ENCODE measurements at regions of chr6 and their contacts with region 1.

Region 1: DNA sequence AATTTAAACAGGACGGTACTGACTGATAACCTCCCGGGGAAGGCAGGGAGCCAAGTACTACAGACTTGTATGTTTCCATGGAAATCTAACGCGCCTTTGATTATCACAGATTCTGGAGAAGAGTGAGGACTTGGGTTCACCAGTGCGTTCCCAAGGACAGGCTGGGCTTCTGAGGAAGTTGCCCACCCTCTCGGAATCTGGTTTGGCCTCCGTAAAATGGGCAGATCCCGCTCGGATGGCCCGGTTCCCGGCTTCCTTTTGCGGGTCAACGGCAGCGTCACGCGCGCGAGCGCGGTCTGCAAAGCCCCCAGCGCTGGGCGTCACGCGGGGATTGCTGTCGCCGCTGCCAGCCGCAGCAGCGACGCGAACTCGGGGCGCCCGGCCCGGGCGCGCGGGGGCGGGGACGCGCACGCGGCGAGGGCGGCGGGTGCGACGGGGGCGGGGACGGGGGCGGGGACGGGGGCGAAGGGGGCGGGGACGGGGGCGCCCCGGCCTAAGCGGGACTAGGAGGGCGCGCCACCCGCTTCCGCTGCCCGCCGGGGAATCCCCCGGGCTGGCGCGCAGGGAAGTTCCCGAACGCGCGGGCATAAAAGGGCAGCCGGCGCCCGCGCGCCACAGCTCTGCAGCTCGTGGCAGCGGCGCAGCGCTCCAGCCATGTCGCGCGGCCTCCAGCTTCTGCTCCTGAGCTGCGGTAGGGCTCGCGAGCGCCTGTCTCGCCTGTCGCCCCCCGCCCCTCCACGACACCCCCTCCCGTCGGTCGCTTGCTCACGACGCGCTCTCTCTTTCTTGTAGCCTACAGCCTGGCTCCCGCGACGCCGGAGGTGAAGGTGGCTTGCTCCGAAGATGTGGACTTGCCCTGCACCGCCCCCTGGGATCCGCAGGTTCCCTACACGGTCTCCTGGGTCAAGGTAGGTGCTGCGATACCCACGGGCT is at the start of gene CD83:
- DNase-seq: peak; percentile 79 to 89 (median 84)
- ATAC-seq: peak; percentile 94
- H3K4me3 ChIP-seq: peak within 1 kb of the TSS; percentile 91
- H3K4me3 Mint-ChIP-seq: peak within 1 kb of the TSS; percentile 87 to 97 (median 93)
- H3K27ac ChIP-seq: peak within 1 kb of the TSS; percentile 87
- H3K27ac Mint-ChIP-seq: peak within 1 kb of the TSS; percentile 91 to 96 (median 94)
- H3K4me1 ChIP-seq: peaks cover 11 to 15% of the 10 kb centered on the region in 2 donors
- H3K4me1 Mint-ChIP-seq: peaks cover 18 to 41% (median 28%) of the 10 kb centered on the region in 7 donors
- H3K27me3 ChIP-seq: no peaks in the 10 kb centered on the region
- H3K27me3 Mint-ChIP-seq: peaks cover 0 to 35% (median 0%) of the 10 kb centered on the region in 5 donors
- total RNA-seq, gene CD83: 5.0 to 113 (median 18.3) TPM

Region 2: DNA sequence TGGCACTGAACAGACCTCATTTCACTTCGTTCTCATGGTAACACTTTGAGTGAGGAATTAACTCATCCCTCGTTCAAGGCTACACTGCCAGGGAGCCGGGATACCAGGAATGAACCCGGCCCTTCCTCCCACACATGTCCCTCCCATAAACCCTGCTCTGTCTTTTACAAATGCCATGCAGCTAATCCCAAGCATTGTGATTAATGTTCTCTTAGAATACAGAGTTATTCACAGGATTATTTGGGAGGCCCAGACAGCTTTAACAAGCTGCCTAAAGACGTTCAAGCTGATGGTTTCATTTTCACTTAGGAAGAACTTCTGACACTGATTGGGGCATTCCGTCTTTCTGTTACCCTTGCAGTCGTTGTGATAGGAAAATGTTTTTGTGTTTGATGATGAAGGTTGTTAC is 42.3 kb before region 1 on chr6:
- CTCF ChIA-PET with region 1: no interaction called
- POLR2A ChIA-PET with region 1: interaction called, 3 read pairs
- intact Hi-C with region 1: loop called (anchors 1 kb)
- DNase-seq: peak in 7 of 9 donors; percentile 46 to 71 (median 61)
- ATAC-seq: peak; percentile 93
- H3K4me3 ChIP-seq: peak overlapping the region; percentile 57
- H3K4me3 Mint-ChIP-seq: peak overlapping the region; percentile 72 to 92 (median 82)
- H3K27ac ChIP-seq: peak overlapping the region; percentile 84
- H3K27ac Mint-ChIP-seq: peak overlapping the region; percentile 87 to 99 (median 95)
- H3K4me1 ChIP-seq: peaks cover 5 to 7% of the 10 kb centered on the region in 2 donors
- H3K4me1 Mint-ChIP-seq: peaks cover 16 to 47% (median 27%) of the 10 kb centered on the region in 7 donors
- H3K27me3 ChIP-seq: no peaks in the 10 kb centered on the region
- H3K27me3 Mint-ChIP-seq: no peaks in the 10 kb centered on the region

Region 3: GRCh38 chr6:14187406-14187805 is 70.0 kb after region 1 on chr6:
- CTCF ChIA-PET with region 1: no interaction called
- POLR2A ChIA-PET with region 1: no interaction called
- intact Hi-C with region 1: no loop called
- DNase-seq: no peak
- ATAC-seq: no peak
- H3K4me3 ChIP-seq: no peak overlapping the region
- H3K4me3 Mint-ChIP-seq: no peak overlapping the region
- H3K27ac ChIP-seq: no peak overlapping the region
- H3K27ac Mint-ChIP-seq: peak overlapping the region in 1 of 9 donors; percentile 44
- H3K4me1 ChIP-seq: no peaks in the 10 kb centered on the region
- H3K4me1 Mint-ChIP-seq: no peaks in the 10 kb centered on the region
- H3K27me3 ChIP-seq: no peaks in the 10 kb centered on the region
- H3K27me3 Mint-ChIP-seq: peaks cover 0 to 22% (median 0%) of the 10 kb centered on the region in 5 donors

Region 4: DNA sequence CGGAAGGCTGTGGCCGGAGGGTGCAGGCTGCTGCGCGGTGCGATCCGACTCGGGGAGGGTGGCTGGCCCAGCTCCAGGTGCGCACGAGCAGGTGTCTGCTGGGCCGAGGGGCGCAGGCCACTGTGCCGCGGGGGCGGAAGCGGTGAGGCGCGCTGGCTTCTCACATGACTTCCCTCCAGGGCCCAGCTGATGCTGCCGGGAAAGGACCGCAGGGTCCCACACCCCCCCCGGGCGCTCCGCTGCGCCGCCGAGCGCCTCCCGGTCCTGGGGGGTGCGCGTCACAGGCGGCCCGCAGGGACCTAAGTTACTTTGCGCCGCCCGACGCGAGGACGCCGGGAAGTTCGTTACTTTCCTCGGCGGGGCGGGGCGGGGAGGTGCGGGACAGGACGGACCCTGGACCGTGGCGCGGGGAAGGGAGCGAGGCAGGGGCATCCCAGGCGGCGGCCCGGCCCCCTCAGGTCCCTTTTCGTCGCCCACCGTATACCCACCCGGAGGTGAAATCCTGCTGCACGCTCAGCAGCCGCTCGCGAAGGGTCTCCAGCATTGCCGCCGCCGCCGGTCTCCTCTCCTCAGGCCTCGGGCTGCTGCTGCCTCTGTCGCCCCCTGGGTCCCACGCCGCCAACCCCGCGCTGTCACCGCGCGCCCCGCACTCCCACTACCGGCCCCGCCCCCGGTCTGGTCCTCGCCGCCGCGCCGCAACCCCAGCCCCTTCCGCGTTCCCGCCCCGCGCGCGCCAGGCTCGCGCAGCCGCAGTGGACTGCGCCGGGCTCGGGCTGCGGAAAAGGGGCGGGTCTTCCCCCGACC is 1545.1 kb after region 1 on chr6 and contains the start of gene DTNBP1:
- CTCF ChIA-PET with region 1: no interaction called
- POLR2A ChIA-PET with region 1: no interaction called
- intact Hi-C with region 1: loop called in 1 of 2 experiments (anchors 1 kb)
- DNase-seq: peak; percentile 74 to 93 (median 84)
- ATAC-seq: peak; percentile 90
- H3K4me3 ChIP-seq: peak within 1 kb of the TSS; percentile 82
- H3K4me3 Mint-ChIP-seq: peak within 1 kb of the TSS; percentile 75 to 93 (median 88)
- H3K27ac ChIP-seq: peak within 1 kb of the TSS; percentile 71
- H3K27ac Mint-ChIP-seq: peak within 1 kb of the TSS; percentile 71 to 90 (median 82)
- H3K4me1 ChIP-seq: peaks cover 11 to 20% of the 10 kb centered on the region in 2 donors
- H3K4me1 Mint-ChIP-seq: peaks cover 20 to 47% (median 39%) of the 10 kb centered on the region in 7 donors
- H3K27me3 ChIP-seq: no peaks in the 10 kb centered on the region
- H3K27me3 Mint-ChIP-seq: peaks cover 0 to 20% (median 4%) of the 10 kb centered on the region in 5 donors
- total RNA-seq, gene DTNBP1: 19.8 to 30.8 (median 25.3) TPM

Measured in naive thymus-derived CD4-positive, alpha-beta T cell (primary cell).